ENCODE measurements at regions of chr3 and their contacts with region 1.

Region 1: DNA sequence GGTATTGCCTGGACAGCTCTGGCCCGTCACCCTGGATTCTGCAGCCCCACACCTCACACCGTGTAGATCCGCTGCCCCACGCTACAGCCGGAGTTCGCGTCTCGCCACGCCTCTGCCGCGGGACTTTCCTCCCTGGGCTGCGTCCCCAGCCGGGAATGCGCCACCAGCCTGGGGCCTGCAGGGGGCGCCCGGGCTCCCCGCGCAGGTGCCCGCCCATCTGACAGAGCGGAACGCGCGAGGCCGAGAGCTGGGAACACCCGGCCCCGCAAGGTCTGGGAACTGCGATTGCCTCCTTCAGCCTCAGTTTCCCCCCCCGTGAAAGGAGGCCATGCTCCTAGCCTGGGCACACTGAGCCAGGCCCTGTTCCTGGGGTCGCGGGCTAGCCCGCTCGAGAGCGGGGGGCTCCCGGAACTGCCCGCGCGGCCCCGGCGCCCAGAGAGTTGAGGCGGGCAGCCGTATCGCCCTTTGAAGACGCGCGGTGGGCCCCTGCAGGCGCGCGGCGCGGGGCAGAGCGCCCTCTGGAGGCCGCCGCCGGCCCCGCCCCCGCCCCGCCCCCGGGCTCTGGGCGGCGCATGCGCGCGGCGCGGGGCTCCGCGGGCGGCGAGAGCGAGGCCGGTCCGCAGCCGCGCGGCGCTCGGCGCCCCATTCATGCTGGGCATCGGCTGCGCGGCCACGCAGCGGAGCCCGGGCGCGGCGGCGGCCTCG is at the start of gene PLXNA1:
- DNase-seq: peak; percentile 45 to 77 (median 69)
- H3K4me3 ChIP-seq: peak within 1 kb of the TSS; percentile 18 to 63 (median 29)
- H3K4me3 Mint-ChIP-seq: peak within 1 kb of the TSS; percentile 77 to 89
- H3K27ac ChIP-seq: peak within 1 kb of the TSS; percentile 11 to 67
- H3K27ac Mint-ChIP-seq: peak within 1 kb of the TSS; percentile 46 to 87 (median 82)
- H3K4me1 ChIP-seq: peaks cover 17 to 23% of the 10 kb centered on the region in 2 donors
- H3K4me1 Mint-ChIP-seq: peaks cover 14% of the 10 kb centered on the region
- H3K27me3 ChIP-seq: peaks cover 19 to 70% of the 10 kb centered on the region in 2 donors
- H3K27me3 Mint-ChIP-seq: peaks cover 33 to 82% (median 69%) of the 10 kb centered on the region in 3 donors
- CTCF ChIP-seq: peak; percentile 98
- polyA plus RNA-seq, gene PLXNA1: 2.7 TPM in 1 of 3 donors, not detected in the others

Region 2: DNA sequence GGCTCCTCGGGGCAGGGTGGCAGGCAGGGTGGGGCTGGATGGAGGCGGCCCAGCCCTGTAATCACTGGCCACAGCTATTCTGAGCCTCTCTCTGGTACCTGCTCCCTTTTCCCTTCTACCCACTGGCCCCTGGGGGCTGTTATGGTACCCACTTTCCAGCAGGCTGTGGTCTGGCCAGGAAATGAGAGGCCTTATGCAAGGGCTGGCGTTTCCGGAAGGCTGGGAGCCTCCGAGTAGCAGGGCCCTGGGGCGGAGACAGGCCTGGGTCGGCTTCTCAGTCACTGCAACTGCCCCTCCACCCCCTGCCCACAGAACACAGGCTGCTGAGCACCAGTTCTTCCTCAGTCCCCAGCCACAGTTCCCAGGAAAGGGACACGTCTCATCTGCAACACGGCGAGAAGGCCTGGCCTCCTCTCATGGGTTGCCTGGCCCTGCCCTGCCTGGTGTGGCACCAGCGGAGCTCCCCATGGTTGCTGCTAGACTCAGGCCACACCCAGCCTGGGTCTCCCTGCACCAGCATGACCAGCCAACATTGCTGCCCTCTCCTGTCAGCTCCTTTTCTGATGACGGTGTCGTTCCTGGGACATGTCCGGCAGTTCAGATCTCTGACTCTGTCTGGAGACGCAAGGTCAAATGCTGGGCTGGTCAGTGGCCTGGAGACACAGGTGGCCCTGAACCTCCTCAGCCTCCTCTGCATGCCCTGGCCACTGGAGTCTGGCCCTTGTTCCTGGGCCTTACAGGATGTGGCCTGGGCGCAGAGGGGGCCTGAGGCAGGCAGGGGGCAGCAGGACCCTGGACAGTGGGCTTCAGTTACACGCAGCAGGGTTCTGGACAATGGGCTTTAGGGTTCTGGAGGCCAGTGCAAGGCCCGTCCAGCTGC is 452.2 kb before region 1 on chr3:
- intact Hi-C with region 1: loop called in 1 of 2 experiments (anchors 5 kb)
- DNase-seq: peak; percentile 56 to 72 (median 61)
- H3K4me3 ChIP-seq: peak overlapping the region in 1 of 3 experiments; percentile 58
- H3K4me3 Mint-ChIP-seq: peak overlapping the region; percentile 58 to 86
- H3K27ac ChIP-seq: peak overlapping the region; percentile 90 to 94
- H3K27ac Mint-ChIP-seq: peak overlapping the region; percentile 88 to 96 (median 94)
- H3K4me1 ChIP-seq: peaks cover 81 to 89% of the 10 kb centered on the region in 2 donors
- H3K4me1 Mint-ChIP-seq: peaks cover 72% of the 10 kb centered on the region
- H3K27me3 ChIP-seq: no peaks in the 10 kb centered on the region
- H3K27me3 Mint-ChIP-seq: no peaks in the 10 kb centered on the region
- CTCF ChIP-seq: no peak

Region 3: DNA sequence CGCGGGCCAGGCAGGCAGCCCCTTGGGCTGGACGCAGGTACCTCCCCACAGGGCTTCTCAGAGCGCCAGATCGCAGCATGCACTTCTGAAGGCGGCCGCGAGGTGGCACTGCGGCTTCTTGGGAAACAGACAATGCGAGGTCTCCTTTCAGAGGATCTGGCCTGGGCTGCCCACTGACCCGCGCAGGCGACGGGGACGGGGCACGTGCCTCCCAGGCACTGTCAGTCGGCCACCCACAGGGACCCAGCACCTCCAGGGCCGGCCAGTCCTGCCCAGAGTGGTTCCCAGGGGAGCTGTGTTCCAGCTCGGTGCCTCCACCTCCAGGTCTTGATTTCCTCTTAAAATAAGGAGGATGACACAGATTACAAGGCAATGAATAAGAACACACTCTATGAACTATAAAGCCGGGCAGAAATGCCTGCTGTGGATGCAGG is 303.3 kb before region 1 on chr3:
- intact Hi-C with region 1: loop called in 1 of 2 experiments (anchors 5 kb)
- DNase-seq: peak; percentile 56 to 63 (median 63)
- H3K4me3 ChIP-seq: no peak overlapping the region
- H3K4me3 Mint-ChIP-seq: peak overlapping the region; percentile 11 to 79
- H3K27ac ChIP-seq: no peak overlapping the region
- H3K27ac Mint-ChIP-seq: peak overlapping the region in 1 of 7 donors; percentile 23
- H3K4me1 ChIP-seq: peaks cover 5 to 8% of the 10 kb centered on the region in 2 donors
- H3K4me1 Mint-ChIP-seq: peaks cover 8% of the 10 kb centered on the region
- H3K27me3 ChIP-seq: peaks cover 0 to 10% of the 10 kb centered on the region in 2 donors
- H3K27me3 Mint-ChIP-seq: peaks cover 13 to 22% (median 20%) of the 10 kb centered on the region in 3 donors
- CTCF ChIP-seq: peak; percentile 97

Region 4: GRCh38 chr3:126703512-126704462 is 278.8 kb before region 1 on chr3 and contains the start of gene CHCHD6:
- intact Hi-C with region 1: loop called in 1 of 2 experiments (anchors 10 kb)
- DNase-seq: peak; percentile 88 to 93 (median 90)
- H3K4me3 ChIP-seq: peak within 1 kb of the TSS; percentile 56 to 90 (median 71)
- H3K4me3 Mint-ChIP-seq: peak within 1 kb of the TSS; percentile 95 to 97
- H3K27ac ChIP-seq: no peak within 1 kb of the TSS
- H3K27ac Mint-ChIP-seq: peak within 1 kb of the TSS in 5 of 7 donors; percentile 24 to 82 (median 59)
- H3K4me1 ChIP-seq: peaks cover 14 to 18% of the 10 kb centered on the region in 2 donors
- H3K4me1 Mint-ChIP-seq: peaks cover 17% of the 10 kb centered on the region
- H3K27me3 ChIP-seq: peaks cover 12 to 40% of the 10 kb centered on the region in 2 donors
- H3K27me3 Mint-ChIP-seq: peaks cover 28 to 54% (median 34%) of the 10 kb centered on the region in 3 donors
- CTCF ChIP-seq: no peak
- polyA plus RNA-seq, gene CHCHD6: 1.1 to 1.8 (median 1.8) TPM

Region 5: GRCh38 chr3:126752303-126752842 is 230.2 kb before region 1 on chr3:
- intact Hi-C with region 1: loop called in 1 of 2 experiments (anchors 5 kb)
- DNase-seq: peak; percentile 22 to 50 (median 26)
- H3K4me3 ChIP-seq: no peak overlapping the region
- H3K4me3 Mint-ChIP-seq: no peak overlapping the region
- H3K27ac ChIP-seq: no peak overlapping the region
- H3K27ac Mint-ChIP-seq: no peak overlapping the region
- H3K4me1 ChIP-seq: no peaks in the 10 kb centered on the region
- H3K4me1 Mint-ChIP-seq: no peaks in the 10 kb centered on the region
- H3K27me3 ChIP-seq: no peaks in the 10 kb centered on the region
- H3K27me3 Mint-ChIP-seq: peaks cover 0 to 2% (median 1%) of the 10 kb centered on the region in 3 donors
- CTCF ChIP-seq: peak; percentile 80

Region 6: DNA sequence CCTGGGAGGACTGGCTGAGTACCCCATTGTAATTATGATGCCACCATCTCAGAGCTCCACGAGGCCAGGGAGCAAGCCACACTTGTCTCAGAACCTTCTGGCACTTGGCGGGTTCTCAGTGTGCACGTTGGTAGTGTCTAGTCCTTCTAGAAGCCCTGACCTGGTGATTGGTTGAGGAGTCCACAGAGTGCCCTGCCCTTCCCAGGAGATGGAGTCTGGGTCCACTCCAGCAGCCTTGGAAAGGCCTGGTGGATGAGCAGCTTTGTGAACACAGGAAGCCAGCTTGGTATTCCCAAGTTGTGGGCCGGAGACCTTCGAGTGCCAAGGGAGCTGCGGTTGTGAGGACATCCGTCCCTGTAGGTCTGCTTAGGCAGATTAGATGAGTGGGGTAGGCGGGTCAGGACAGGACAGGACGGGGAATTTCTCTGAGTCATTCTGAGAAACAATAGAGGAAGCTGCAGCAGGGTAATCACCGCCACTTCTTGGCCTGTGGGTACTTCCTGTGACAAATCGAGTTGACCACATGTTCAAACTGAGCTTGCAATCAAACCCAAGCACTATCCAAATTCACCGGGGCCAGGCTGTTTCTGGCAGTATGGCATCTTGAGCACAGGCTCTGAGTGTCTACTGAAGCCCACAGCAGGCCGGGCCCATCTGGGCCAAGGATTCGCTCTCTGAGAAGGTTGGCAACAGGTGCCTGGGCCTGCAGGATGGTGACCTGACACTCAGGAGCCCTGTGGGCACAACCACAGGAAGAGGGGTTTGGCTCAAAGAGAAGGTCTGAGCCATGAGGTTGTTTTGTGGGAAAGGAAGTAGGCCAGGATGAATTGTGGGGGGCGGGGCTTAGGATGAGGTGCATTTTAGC is 71.2 kb before region 1 on chr3:
- intact Hi-C with region 1: loop called in 1 of 2 experiments (anchors 5 kb)
- DNase-seq: peak; percentile 95 to 99 (median 98)
- H3K4me3 ChIP-seq: peak overlapping the region in 1 of 3 experiments; percentile 16
- H3K4me3 Mint-ChIP-seq: peak overlapping the region; percentile 67 to 82
- H3K27ac ChIP-seq: peak overlapping the region; percentile 75 to 84
- H3K27ac Mint-ChIP-seq: peak overlapping the region; percentile 94 to 97 (median 96)
- H3K4me1 ChIP-seq: peaks cover 31 to 40% of the 10 kb centered on the region in 2 donors
- H3K4me1 Mint-ChIP-seq: peaks cover 38% of the 10 kb centered on the region
- H3K27me3 ChIP-seq: peaks cover 69 to 91% of the 10 kb centered on the region in 2 donors
- H3K27me3 Mint-ChIP-seq: peaks cover 32 to 46% (median 35%) of the 10 kb centered on the region in 3 donors
- CTCF ChIP-seq: no peak

Region 7: DNA sequence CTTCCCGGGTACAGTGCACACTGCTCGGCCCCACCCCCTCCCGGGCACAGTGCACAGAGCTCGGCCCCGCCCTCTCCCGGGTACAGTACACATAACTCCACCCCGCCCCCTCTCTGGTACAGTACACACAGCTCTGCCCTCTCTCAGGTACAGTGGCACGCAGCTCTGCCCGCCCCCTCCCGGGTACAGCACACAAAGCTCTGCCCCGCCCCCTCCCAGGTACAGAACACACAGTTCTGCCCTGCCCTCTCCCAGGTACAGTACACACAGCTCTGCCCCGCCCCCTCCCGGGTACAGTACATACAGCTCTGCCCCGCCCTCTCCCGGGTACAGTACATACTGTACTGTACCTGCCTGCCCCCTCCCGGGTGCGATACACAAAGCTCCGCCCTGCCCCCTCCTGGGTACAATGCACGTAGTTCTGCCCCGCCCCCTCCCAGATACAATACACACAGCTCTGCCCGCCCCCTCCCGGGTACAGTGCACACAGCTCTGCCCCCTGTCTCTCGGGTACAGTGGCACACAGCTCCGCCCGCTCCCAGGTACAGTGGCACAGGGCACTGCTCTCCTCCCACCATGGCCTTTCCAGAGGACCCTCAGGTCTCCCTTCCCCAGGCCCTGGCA is 321.6 kb after region 1 on chr3:
- intact Hi-C with region 1: loop called in 1 of 2 experiments (anchors 10 kb)
- DNase-seq: no peak
- H3K4me3 ChIP-seq: no peak overlapping the region
- H3K4me3 Mint-ChIP-seq: no peak overlapping the region
- H3K27ac ChIP-seq: no peak overlapping the region
- H3K27ac Mint-ChIP-seq: no peak overlapping the region
- H3K4me1 ChIP-seq: peaks cover 34 to 48% of the 10 kb centered on the region in 2 donors
- H3K4me1 Mint-ChIP-seq: peaks cover 53% of the 10 kb centered on the region
- H3K27me3 ChIP-seq: no peaks in the 10 kb centered on the region
- H3K27me3 Mint-ChIP-seq: peaks cover 0 to 15% (median 6%) of the 10 kb centered on the region in 3 donors
- CTCF ChIP-seq: no peak